Ascending aorta (tissue), 2 donors: ENCODE measurements at regions of chr9 and their contacts with region 1.

Region 1: DNA sequence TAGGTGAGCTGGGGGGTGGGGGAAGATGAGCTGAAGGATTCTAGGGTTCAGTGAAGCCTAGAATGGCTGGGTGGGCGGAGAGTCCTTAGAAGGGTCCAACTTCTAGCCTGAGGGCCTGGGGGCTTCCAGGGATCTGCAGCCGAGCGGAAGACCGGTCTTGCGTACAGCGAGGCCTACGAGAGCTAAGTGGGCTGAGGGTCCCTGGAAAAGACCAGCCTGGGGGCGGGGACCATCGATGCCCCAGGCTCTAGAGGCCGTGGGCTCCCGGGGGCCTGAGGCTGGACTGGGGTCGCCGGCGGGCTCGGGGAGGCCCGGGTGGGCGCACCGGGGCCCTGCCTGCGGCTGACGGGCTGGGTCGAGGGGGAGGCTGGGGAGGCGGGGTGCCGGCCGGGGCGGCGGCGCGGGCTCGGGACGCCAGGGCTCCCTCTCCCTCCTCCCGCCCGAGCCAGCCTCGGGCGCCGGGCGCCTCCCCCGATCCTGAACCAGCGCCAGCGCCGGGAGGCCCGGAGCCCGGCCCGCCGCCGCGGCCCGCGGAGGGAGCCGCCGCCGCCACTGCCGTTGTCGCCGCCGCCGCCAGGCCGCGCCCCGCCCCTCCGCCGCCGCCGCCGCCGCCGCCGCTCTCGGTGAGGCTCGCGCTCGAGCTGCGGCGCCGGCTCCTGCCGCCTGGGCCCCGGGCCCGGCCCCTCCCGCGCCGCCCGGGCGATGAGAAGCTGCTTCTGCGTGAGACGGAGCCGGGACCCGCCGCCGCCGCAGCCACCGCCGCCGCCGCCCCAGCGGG is at the start of gene MVB12B:
- DNase-seq: no peak
- H3K4me3 ChIP-seq: peak within 1 kb of the TSS; percentile 63 to 79
- H3K27ac ChIP-seq: peak within 1 kb of the TSS; percentile 68 to 82
- H3K4me1 ChIP-seq: no peaks in the 10 kb centered on the region
- H3K27me3 ChIP-seq: no peaks in the 10 kb centered on the region
- CTCF ChIP-seq: no peak
- total RNA-seq, gene MVB12B: 9.4 TPM

Region 2: DNA sequence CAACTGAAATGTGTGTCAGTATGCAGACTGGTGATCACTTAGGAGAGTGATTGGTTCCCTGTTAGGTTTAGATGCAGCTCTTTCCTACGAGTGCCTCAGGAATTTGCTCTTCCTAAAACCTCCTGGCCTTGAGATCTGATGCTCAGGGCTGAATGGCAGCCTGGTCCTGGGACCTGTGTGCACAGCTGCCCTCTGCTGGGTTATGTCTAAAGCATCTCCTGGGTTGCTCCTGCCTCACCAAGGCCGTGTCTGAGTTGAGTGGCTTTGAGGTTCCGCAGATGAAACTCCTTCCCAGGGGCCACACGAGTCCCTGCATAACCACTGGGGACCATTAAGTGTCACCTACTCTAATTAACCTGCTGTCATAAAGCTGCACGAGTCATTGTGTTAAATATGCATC is 59.7 kb after region 1 on chr9:
- intact Hi-C with region 1: no loop called
- DNase-seq: peak in 1 of 2 donors; percentile 22
- H3K4me3 ChIP-seq: no peak overlapping the region
- H3K27ac ChIP-seq: no peak overlapping the region
- H3K4me1 ChIP-seq: no peaks in the 10 kb centered on the region
- H3K27me3 ChIP-seq: no peaks in the 10 kb centered on the region
- CTCF ChIP-seq: no peak

Region 3: GRCh38 chr9:126398403-126399058 is 72.1 kb after region 1 on chr9:
- intact Hi-C with region 1: loop called (anchors 5 kb)
- DNase-seq: peak in 1 of 2 donors; percentile 82
- H3K4me3 ChIP-seq: no peak overlapping the region
- H3K27ac ChIP-seq: no peak overlapping the region
- H3K4me1 ChIP-seq: no peaks in the 10 kb centered on the region
- H3K27me3 ChIP-seq: no peaks in the 10 kb centered on the region
- CTCF ChIP-seq: peak; percentile 88 to 98 (median 92)

Region 4: DNA sequence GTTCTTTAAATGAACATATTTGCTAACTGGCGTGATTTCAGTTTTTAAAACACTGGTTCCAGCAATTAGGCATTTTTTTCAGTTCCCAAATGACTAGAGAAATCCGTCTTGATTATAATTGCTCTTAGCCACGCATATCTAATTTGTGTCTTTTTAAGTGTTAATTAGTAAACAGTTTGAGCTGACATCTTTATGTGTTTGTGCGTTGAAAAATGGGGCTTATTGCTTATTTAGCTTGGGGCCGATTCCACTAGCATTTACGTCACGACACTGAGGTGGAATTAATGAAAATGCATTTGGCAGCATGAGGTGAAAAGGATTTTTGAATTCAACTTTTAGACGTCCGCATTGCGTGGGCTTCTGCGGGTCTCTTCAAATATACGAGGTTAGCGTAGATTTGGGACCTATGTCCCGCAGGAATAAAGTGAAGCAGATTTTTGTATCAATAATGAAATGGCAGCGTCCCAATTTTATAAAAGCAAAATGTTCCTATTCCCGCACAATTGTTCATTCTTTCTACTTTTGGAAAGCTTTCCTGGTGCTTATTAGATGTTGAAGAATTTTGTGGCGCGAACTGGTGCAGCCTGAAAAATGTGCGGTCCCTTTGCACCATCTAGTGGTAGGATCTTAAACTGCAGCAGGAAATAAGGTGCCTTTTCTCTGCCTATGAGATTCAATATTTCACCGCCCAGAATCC is 164.6 kb after region 1 on chr9:
- intact Hi-C with region 1: loop called (anchors 10 kb)
- DNase-seq: no peak
- H3K4me3 ChIP-seq: no peak overlapping the region
- H3K27ac ChIP-seq: no peak overlapping the region
- H3K4me1 ChIP-seq: no peaks in the 10 kb centered on the region
- H3K27me3 ChIP-seq: no peaks in the 10 kb centered on the region
- CTCF ChIP-seq: peak; percentile 81 to 92 (median 82)

Region 5: GRCh38 chr9:126804696-126805545 is 478.5 kb after region 1 on chr9 and contains the start of gene ZBTB43:
- intact Hi-C with region 1: loop called (anchors 10 kb)
- DNase-seq: peak; percentile 88 to 98
- H3K4me3 ChIP-seq: peak within 1 kb of the TSS; percentile 89 to 97
- H3K27ac ChIP-seq: peak within 1 kb of the TSS; percentile 76 to 80
- H3K4me1 ChIP-seq: peaks cover 10 to 13% of the 10 kb centered on the region in 2 donors
- H3K27me3 ChIP-seq: no peaks in the 10 kb centered on the region
- CTCF ChIP-seq: no peak
- total RNA-seq, gene ZBTB43: 2.4 TPM